ENCODE measurements at regions of chr10 and their contacts with region 1.

Region 1: DNA sequence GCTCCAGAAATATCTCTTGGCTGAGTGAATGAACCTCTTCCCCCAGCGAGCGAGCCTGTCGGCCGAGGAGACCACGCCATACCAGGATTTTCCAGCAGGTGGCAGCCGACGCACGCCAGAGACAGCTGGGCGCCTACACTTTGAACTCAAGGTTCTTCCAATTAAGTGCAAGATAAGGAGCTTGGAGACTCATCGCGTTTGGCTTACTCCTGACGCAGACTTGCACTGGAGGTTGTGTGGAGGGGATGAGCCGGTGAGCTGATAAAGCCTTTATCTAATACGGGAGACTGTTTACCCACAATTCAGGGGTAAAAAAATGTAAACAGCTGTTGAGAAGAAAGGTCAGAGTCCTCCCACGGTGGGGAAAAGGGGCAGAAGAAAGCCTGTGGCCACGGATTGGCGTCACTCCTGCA is 45.9 kb upstream of the EMX2 start:
- DNase-seq: peak; percentile 84
- ATAC-seq: peak; percentile 97
- H3K4me3 ChIP-seq: no peak overlapping the region; a peak in 1 of 4 replicates
- H3K27ac ChIP-seq: no peak overlapping the region
- H3K4me1 ChIP-seq: peaks cover 0 to 7% of the 10 kb centered on the region in 2 experiments; a peak in 1 of 4 replicates
- H3K27me3 ChIP-seq: peaks cover 31% of the 10 kb centered on the region
- CTCF ChIP-seq: peak; percentile 96 to 100 (median 97)
- POLR2A ChIP-seq: no peak
- RAD21 ChIP-seq: peak; percentile 99

Region 2: DNA sequence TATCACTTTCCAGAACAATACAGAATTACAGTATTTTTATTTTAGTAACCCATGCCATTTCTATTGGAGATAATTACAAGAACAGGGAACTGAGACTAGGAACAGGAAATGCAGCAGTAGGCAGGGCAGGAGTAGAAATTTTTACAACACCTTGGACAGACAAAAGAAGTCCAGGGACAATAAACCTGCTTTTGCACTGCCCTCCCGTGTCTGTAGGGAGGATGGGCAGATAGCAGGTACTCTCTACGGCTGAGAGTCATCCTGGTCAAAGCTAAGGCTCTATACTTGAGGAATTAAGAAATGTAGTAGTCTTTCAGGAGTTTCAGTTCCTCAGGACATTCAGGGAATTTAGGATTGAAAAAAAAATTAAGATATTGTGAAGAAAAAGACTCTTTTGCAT is 422.0 kb before region 1 on chr10:
- CTCF ChIA-PET with region 1: no interaction called
- POLR2A ChIA-PET with region 1: no interaction called
- RAD21 ChIA-PET with region 1: no interaction called
- intact Hi-C with region 1: no loop called
- DNase-seq: peak; percentile 52
- ATAC-seq: peak; percentile 81
- H3K4me3 ChIP-seq: no peak overlapping the region
- H3K27ac ChIP-seq: no peak overlapping the region
- H3K4me1 ChIP-seq: peaks cover 15 to 33% of the 10 kb centered on the region in 2 experiments
- H3K27me3 ChIP-seq: no peaks in the 10 kb centered on the region
- CTCF ChIP-seq: peak; percentile 58 to 88 (median 72)
- POLR2A ChIP-seq: no peak
- RAD21 ChIP-seq: peak; percentile 95

Region 3: DNA sequence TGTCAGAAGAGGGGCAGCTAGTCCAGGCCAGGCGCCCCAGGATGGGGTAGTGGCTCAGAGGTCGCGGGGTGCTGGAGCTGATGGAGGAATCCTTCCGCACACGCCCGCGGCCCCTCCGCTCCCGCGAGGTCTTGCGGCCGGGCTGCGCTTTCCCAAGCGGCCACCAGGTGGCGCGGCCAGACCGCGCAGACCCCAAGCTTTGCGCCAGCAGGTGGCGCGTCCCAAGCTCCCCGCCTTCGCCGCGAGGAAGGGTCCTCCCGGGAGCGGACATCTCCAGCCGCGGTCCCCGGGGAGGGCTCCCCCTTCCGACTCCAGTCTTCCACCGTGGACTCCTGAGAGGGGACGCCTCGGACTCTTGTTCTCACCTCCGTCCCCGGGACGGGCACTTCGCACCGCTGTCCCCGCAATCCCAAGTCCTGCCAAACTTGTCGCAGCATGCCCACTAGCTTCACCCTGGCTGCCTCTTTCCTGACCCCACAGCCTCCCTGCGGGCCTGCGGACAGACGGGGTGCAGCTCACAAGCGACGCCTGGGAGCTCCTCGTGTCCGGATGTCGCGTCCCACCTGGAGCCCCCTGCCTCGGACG is 279.9 kb before region 1 on chr10:
- CTCF ChIA-PET with region 1: interaction called, 12 read pairs
- POLR2A ChIA-PET with region 1: no interaction called
- RAD21 ChIA-PET with region 1: no interaction called
- intact Hi-C with region 1: no loop called
- DNase-seq: peak; percentile 54
- ATAC-seq: peak; percentile 84
- H3K4me3 ChIP-seq: peak overlapping the region; percentile 19 to 27
- H3K27ac ChIP-seq: peak overlapping the region; percentile 6; the same call in 1 of the 2 replicates
- H3K4me1 ChIP-seq: peaks cover 2 to 21% of the 10 kb centered on the region in 2 experiments; a peak in 2 of 4 replicates
- H3K27me3 ChIP-seq: peaks cover 6% of the 10 kb centered on the region; the same call in 1 of the 2 replicates
- CTCF ChIP-seq: peak; percentile 100
- POLR2A ChIP-seq: no peak
- RAD21 ChIP-seq: peak; percentile 99

Region 4: DNA sequence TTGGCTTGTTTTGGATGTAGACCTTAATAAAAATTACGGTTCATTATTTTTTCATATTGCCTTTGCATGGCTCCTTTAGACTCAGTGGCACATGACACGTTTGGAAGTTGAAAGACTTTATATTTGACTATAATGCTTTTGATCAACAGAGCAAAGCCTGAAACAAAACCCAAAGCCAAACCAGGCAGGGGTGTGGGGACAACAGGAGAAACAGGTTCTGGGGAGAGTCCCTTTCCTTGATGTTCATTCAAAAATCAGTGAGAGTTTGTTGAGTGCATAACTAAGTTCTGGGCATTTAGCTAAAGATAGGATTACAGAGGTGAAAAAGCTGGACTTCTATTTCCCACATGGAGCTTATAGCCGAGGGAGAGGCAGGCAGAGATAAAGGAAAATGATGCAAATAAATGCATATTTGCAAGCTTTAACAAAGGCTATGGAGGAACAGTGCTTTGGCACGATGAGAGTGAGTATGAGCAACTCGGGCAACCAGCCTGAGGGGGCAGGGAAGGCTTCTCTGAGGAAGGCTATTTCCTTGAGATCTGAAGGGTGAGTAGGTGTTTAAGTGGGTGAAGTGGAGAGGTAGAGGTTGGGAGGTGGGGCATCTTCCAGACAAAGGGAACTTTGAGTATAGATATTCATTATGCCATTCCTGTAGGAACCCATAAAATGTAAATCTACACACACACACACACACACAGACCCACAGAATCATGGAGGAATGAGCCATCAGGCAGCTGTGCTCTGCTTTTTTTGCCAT is 86.9 kb before region 1 on chr10:
- CTCF ChIA-PET with region 1: no interaction called
- POLR2A ChIA-PET with region 1: no interaction called
- RAD21 ChIA-PET with region 1: no interaction called
- intact Hi-C with region 1: no loop called
- DNase-seq: no peak
- ATAC-seq: no peak
- H3K4me3 ChIP-seq: no peak overlapping the region
- H3K27ac ChIP-seq: no peak overlapping the region
- H3K4me1 ChIP-seq: no peaks in the 10 kb centered on the region
- H3K27me3 ChIP-seq: peaks cover 18% of the 10 kb centered on the region; the same call in 1 of the 2 replicates
- CTCF ChIP-seq: no peak
- POLR2A ChIP-seq: no peak
- RAD21 ChIP-seq: no peak

Region 5: GRCh38 chr10:118106426-118106825 is 609.8 kb after region 1 on chr10:
- CTCF ChIA-PET with region 1: interaction called, 4 read pairs
- POLR2A ChIA-PET with region 1: no interaction called
- RAD21 ChIA-PET with region 1: no interaction called
- intact Hi-C with region 1: loop called (anchors 2 kb)
- DNase-seq: peak; percentile 8
- ATAC-seq: peak; percentile 87
- H3K4me3 ChIP-seq: no peak overlapping the region
- H3K27ac ChIP-seq: no peak overlapping the region
- H3K4me1 ChIP-seq: no peaks in the 10 kb centered on the region
- H3K27me3 ChIP-seq: no peaks in the 10 kb centered on the region
- CTCF ChIP-seq: peak; percentile 51 to 71 (median 69); a peak in 5 of 6 replicates
- POLR2A ChIP-seq: no peak
- RAD21 ChIP-seq: peak; percentile 71

Region 6: DNA sequence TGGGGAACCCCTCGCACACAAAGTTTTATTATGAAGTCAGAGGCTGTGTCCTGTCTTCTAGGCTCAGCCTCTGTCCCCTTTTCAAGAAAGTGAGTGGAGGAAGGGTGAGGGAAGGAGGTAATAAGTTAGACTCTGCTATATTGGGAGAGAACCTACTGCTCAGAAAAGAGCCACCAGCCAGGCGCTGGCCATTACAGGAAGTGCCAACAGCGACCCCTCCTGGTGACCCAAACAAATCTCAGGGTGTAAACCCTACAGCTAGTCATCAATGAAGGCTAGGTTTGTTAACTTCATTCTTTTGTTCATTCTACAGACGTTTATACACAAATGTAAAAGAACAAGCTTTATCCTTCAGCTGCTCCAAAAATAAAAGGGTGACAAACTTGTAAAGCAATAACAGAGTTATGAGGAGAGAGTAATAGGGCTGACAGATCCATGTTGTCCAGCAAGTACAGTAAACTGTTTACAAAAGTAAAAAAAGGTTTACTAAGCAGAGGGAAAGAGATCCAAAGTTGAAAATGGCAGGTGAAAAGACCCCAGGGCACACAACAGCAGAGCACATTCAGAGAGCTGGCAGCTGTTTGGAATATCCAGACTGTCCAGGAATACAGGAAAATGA is 762.8 kb after region 1 on chr10:
- CTCF ChIA-PET with region 1: interaction called, 22 read pairs
- POLR2A ChIA-PET with region 1: no interaction called
- RAD21 ChIA-PET with region 1: interaction called in 1 of 2 experiments, 3 read pairs
- intact Hi-C with region 1: no loop called
- DNase-seq: peak; percentile 32
- ATAC-seq: peak; percentile 98
- H3K4me3 ChIP-seq: no peak overlapping the region
- H3K27ac ChIP-seq: no peak overlapping the region
- H3K4me1 ChIP-seq: no peaks in the 10 kb centered on the region
- H3K27me3 ChIP-seq: peaks cover 54% of the 10 kb centered on the region
- CTCF ChIP-seq: peak; percentile 61 to 99 (median 92); a peak in 5 of 6 replicates
- POLR2A ChIP-seq: no peak
- RAD21 ChIP-seq: peak; percentile 70

Region 7: DNA sequence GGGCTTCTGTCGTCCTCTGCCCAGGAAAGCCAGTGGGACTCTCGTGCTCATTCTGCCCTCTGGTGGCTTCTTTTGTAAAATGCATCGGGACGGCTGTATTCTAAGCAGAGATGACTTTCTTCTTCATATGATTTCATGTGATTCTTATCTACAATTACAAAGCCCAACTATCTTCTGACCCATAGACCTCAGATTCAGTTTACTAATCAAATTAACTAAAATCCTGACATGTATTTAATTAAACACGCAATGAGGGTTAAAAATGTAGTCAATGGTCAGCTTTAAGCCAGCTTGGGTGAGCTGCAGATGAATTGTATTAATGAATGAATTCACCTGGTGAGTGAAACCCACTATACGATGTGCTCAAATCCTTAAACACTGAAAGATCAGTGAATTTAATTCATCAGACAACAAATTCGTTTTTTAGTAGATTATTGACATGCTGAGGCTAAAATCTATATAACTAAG is 963.1 kb after region 1 on chr10:
- CTCF ChIA-PET with region 1: interaction called, 57 read pairs
- POLR2A ChIA-PET with region 1: no interaction called
- RAD21 ChIA-PET with region 1: interaction called, 4 to 5 read pairs
- intact Hi-C with region 1: loop called (anchors 1 kb)
- DNase-seq: peak; percentile 73
- ATAC-seq: peak; percentile 99
- H3K4me3 ChIP-seq: no peak overlapping the region
- H3K27ac ChIP-seq: no peak overlapping the region
- H3K4me1 ChIP-seq: peaks cover 0 to 6% of the 10 kb centered on the region in 2 experiments; a peak in 1 of 4 replicates
- H3K27me3 ChIP-seq: peaks cover 33% of the 10 kb centered on the region
- CTCF ChIP-seq: peak; percentile 86 to 93 (median 90)
- POLR2A ChIP-seq: no peak
- RAD21 ChIP-seq: peak; percentile 93

Region 8: GRCh38 chr10:118568327-118568848 is 1071.8 kb after region 1 on chr10:
- CTCF ChIA-PET with region 1: interaction called, 16 read pairs
- POLR2A ChIA-PET with region 1: no interaction called
- RAD21 ChIA-PET with region 1: interaction called in 1 of 2 experiments, 3 read pairs
- intact Hi-C with region 1: no loop called
- DNase-seq: peak; percentile 63
- ATAC-seq: peak; percentile 74
- H3K4me3 ChIP-seq: peak overlapping the region in 1 of 2 experiments; percentile 20; a peak in 2 of 4 replicates
- H3K27ac ChIP-seq: no peak overlapping the region
- H3K4me1 ChIP-seq: peaks cover 0 to 4% of the 10 kb centered on the region in 2 experiments; a peak in 1 of 4 replicates
- H3K27me3 ChIP-seq: no peaks in the 10 kb centered on the region
- CTCF ChIP-seq: peak; percentile 70 to 93 (median 73)
- POLR2A ChIP-seq: no peak
- RAD21 ChIP-seq: peak; percentile 96